HCT116 (cell line): ENCODE measurements at regions of chr4 and their contacts with region 1.

Region 1: GRCh38 chr4:52069571-52069970 is 18.5 kb downstream of the SPATA18 start:
- DNase-seq: no peak
- ATAC-seq: no peak
- H3K4me3 ChIP-seq: no peak overlapping the region
- H3K27ac ChIP-seq: no peak overlapping the region
- H3K4me1 ChIP-seq: no peaks in the 10 kb centered on the region
- H3K27me3 ChIP-seq: peaks cover 32% of the 10 kb centered on the region
- CTCF ChIP-seq: no peak
- POLR2A ChIP-seq: no peak
- RAD21 ChIP-seq: no peak

Region 2: DNA sequence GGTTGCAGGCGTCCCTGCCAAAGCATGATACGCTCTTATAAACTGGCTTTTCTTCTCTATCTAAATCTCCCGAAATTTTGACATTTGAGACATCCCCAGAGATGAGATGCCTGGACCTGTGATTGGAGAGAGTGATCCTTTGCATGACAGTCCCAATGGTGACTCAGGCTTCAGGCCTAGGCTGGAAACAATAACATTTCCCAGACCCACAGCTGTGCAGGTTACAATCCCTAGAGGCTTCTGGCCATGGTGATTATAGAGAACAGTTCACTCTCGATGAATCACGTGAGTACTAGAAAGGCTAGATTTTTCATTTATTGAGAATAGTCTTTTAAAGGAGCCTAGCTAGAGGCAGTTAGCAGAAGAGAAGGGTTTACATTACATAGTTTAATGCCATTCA is 57.4 kb after region 1 on chr4:
- CTCF ChIA-PET with region 1: no interaction called
- POLR2A ChIA-PET with region 1: no interaction called
- RAD21 ChIA-PET with region 1: no interaction called
- intact Hi-C with region 1: loop called (anchors 10 kb)
- DNase-seq: no peak
- ATAC-seq: no peak
- H3K4me3 ChIP-seq: no peak overlapping the region
- H3K27ac ChIP-seq: no peak overlapping the region
- H3K4me1 ChIP-seq: no peaks in the 10 kb centered on the region
- H3K27me3 ChIP-seq: peaks cover 18% of the 10 kb centered on the region; the same call in 1 of the 2 replicates
- CTCF ChIP-seq: no peak
- POLR2A ChIP-seq: no peak
- RAD21 ChIP-seq: no peak